Activated CD4-positive, alpha-beta T cell treated with anti-CD3 and anti-CD28 coated beads for 36 hours (primary cell): ENCODE measurements at regions of chr6 and their contacts with region 1.

Region 1: GRCh38 chr6:45922728-45923351 is 92.8 kb downstream of the CLIC5 start:
- DNase-seq: peak; percentile 83
- ATAC-seq: peak; percentile 22
- H3K4me3 Mint-ChIP-seq: peak overlapping the region; percentile 15
- H3K27ac Mint-ChIP-seq: peak overlapping the region; percentile 90
- H3K4me1 Mint-ChIP-seq: peaks cover 53% of the 10 kb centered on the region
- H3K27me3 Mint-ChIP-seq: no peaks in the 10 kb centered on the region

Region 2: GRCh38 chr6:44593539-44593944 is 1329.3 kb before region 1 on chr6:
- CTCF ChIA-PET with region 1: interaction called, 4 read pairs
- POLR2A ChIA-PET with region 1: no interaction called
- intact Hi-C with region 1: loop called (anchors 1 to 2 kb)
- DNase-seq: peak; percentile 80
- ATAC-seq: peak; percentile 87
- H3K4me3 Mint-ChIP-seq: no peak overlapping the region
- H3K27ac Mint-ChIP-seq: peak overlapping the region; percentile 9
- H3K4me1 Mint-ChIP-seq: peaks cover 3% of the 10 kb centered on the region
- H3K27me3 Mint-ChIP-seq: peaks cover 11% of the 10 kb centered on the region

Region 3: DNA sequence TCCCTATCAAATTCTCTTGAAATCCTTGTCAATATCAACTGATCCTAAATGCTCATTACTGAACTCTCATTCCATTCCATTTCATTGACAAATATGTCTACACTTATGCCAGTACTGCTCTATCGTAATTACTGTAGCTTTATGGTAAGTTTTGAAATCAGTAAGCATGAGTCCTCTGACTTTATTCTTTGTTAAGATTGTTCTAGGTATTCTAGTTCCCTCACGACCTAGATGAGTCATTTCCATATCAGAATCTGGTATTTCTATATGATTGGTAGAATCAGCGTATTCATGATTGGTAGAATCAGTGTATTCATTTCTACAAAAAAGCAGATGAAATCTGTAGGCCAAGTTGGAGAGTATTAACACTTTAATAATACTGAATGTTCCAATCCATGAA is 913.3 kb before region 1 on chr6:
- CTCF ChIA-PET with region 1: interaction called, 3 read pairs
- POLR2A ChIA-PET with region 1: no interaction called
- intact Hi-C with region 1: loop called in 1 of 2 experiments (anchors 1 kb)
- DNase-seq: no peak
- ATAC-seq: peak; percentile 98
- H3K4me3 Mint-ChIP-seq: no peak overlapping the region
- H3K27ac Mint-ChIP-seq: peak overlapping the region; percentile 10
- H3K4me1 Mint-ChIP-seq: peaks cover 16% of the 10 kb centered on the region
- H3K27me3 Mint-ChIP-seq: no peaks in the 10 kb centered on the region

Region 4: GRCh38 chr6:45436544-45437438 is 486.0 kb before region 1 on chr6:
- CTCF ChIA-PET with region 1: no interaction called
- POLR2A ChIA-PET with region 1: no interaction called
- intact Hi-C with region 1: loop called in 1 of 2 experiments (anchors 5 kb)
- DNase-seq: peak; percentile 69
- ATAC-seq: peak; percentile 92
- H3K4me3 Mint-ChIP-seq: peak overlapping the region; percentile 59
- H3K27ac Mint-ChIP-seq: peak overlapping the region; percentile 92
- H3K4me1 Mint-ChIP-seq: peaks cover 74% of the 10 kb centered on the region
- H3K27me3 Mint-ChIP-seq: peaks cover 2% of the 10 kb centered on the region

Region 5: GRCh38 chr6:45614896-45615295 is 307.9 kb before region 1 on chr6:
- CTCF ChIA-PET with region 1: no interaction called
- POLR2A ChIA-PET with region 1: no interaction called
- intact Hi-C with region 1: no loop called
- DNase-seq: no peak
- ATAC-seq: no peak
- H3K4me3 Mint-ChIP-seq: no peak overlapping the region
- H3K27ac Mint-ChIP-seq: no peak overlapping the region
- H3K4me1 Mint-ChIP-seq: peaks cover 29% of the 10 kb centered on the region
- H3K27me3 Mint-ChIP-seq: no peaks in the 10 kb centered on the region

Region 6: DNA sequence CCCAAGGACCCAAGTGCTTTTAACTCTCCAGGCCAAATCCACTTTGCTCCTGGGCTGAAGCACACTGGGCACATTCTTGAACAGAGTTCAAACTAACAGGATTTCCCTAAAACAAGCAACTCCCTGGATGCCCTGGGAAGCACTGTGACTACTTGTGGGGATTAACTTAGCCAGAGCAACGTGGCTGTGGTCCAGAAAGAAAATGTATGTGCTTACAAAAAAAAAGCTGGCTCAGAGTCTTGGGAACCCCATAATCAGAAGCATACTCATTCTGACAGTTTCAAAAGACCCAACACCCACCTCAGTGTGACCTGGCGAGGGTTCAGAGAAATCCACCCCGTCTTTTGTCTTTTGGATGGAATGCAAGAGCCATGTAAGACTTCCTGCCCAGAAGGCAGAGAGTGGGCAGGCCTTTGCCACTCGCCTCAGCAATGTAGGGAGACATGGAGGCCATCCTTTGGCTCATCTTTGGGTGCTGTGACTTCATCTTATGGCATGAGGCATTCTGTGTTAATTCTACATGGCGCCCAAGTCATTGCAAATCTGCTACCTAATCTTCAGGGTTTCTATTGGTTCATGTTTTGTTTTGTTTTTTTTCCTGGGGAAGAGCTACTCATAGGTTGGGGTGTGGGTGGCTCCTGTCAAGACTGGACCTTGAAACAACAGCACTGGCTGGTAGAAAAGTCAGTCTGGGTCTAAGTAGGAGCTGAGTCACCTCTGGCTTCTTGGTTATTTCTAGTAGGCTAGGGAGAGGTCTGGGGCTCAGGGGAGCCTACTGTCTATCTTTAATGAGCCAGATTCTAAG is 296.6 kb before region 1 on chr6:
- CTCF ChIA-PET with region 1: no interaction called
- POLR2A ChIA-PET with region 1: no interaction called
- intact Hi-C with region 1: loop called in 1 of 2 experiments (anchors 5 kb)
- DNase-seq: peak; percentile 42
- ATAC-seq: peak; percentile 57
- H3K4me3 Mint-ChIP-seq: no peak overlapping the region
- H3K27ac Mint-ChIP-seq: peak overlapping the region; percentile 76
- H3K4me1 Mint-ChIP-seq: peaks cover 45% of the 10 kb centered on the region
- H3K27me3 Mint-ChIP-seq: no peaks in the 10 kb centered on the region

Region 7: GRCh38 chr6:45822246-45822812 is 100.5 kb before region 1 on chr6:
- CTCF ChIA-PET with region 1: interaction called, 4 read pairs
- POLR2A ChIA-PET with region 1: no interaction called
- intact Hi-C with region 1: loop called (anchors 1 to 2 kb)
- DNase-seq: peak; percentile 59
- ATAC-seq: peak; percentile 87
- H3K4me3 Mint-ChIP-seq: peak overlapping the region; percentile 59
- H3K27ac Mint-ChIP-seq: peak overlapping the region; percentile 95
- H3K4me1 Mint-ChIP-seq: peaks cover 37% of the 10 kb centered on the region
- H3K27me3 Mint-ChIP-seq: peaks cover 5% of the 10 kb centered on the region